ENCODE measurements at regions of chr1 and their contacts with region 1.

Region 1: DNA sequence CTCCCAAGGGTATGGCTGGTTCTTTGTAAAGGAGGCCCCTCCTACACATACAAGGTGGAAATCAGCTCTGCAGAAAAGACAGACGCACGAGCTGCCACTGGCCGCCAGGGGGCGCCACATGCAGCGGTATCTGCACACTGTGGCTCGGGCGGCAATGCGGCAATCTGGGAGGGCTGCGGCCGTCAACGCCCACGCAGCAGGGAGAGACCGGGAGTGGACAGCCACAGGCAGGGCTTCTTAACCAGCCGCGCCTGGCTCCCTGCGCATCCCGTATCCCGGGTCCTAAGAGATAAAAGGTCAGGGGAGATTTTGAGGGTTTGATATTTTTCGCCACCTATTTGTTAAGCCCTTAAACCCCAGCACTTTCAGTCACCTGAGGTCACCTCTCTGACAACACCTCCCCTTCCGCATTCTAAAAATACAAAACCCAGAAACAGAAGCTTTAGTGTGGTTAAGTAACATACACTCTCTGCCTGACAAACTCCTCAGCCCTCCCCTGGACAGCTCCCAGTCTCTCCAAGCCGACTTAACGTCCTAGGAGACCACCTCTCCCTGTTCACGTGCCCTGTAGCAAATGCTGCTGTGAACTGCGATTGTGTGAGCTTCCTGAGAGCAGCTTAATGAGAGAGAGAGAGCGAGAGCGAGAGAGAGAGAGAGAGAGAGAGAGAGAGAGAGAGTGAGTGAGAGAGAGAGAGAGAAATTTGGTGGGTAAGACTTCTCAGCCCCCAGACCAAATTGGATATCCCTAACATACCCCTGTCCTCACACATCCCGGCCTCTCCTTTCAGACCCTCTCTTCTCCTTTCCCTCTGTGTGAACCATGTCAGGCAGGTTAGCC is 13.5 kb upstream of the KCNA2 start:
- DNase-seq: peak; percentile 89

Region 2: DNA sequence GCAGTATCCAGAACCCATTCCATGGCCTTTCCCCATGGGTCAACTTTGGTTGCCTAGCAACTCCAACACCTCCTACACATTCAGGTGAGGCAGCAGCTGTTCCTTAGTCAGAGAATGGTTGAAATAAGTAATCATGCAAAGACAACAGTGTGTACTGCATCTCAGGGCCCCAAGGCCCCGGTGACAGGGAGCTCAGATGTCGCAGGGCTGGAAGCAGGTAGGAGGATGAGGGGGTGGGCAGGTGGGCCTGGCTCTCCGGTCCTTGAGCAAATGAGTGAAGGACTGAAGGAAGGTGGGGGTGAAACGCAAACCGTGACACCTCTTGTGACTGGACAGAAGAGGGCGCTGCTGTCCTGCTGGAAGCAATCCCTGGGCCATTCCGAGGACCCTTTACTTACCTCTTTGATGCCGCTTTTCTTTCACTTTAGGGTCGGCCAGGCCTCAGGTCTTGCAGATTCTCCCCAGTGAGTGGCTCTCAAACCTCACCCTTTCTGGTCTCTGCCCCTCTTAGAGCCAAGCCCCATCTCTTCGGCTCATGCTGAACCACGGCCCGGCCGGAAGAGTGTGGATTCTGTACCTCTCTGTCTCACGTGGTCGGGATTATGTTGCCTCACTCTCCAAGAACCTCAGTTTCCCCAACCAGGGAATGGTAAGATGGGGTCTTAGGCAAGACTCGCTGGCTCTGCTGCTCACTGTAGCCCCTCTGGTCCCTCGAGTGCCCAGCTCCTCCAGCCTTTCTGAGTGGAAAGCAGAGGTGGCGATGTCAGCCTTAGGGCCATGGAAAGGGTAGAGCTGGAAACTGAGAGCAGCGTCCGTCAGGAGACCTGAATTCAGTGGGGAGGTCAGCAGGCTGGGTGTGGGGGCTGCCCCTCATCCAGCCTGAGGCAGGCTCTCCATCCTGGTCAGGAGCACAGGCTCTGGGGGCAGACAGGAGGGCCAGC is 95.0 kb before region 1 on chr1:
- in situ Hi-C with region 1: loop called (anchors 10 kb)
- DNase-seq: peak; percentile 67

Region 3: DNA sequence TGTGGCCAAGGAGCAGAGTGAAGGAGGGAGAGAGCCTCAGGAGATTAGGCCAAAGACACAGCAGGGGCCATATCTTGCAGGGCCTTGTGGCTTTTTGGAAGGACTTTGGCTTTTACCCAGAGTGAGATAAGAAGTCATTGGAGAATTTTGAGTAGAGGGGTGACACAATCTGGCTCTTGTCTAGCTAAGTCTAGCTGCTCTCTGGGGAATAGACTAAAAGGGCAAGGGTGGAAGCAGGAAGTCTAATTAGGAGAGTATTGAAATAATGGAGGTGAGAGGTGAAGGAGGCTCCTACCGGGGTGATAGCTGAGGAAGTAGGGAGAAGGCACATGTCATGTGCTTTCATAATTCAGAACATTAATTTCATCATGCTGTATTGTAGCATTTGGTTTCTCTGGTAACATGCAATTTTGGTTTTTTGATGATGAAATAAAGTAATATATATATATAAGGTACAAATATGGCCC is 89.4 kb after region 1 on chr1:
- in situ Hi-C with region 1: no loop called
- DNase-seq: no peak

Region 4: DNA sequence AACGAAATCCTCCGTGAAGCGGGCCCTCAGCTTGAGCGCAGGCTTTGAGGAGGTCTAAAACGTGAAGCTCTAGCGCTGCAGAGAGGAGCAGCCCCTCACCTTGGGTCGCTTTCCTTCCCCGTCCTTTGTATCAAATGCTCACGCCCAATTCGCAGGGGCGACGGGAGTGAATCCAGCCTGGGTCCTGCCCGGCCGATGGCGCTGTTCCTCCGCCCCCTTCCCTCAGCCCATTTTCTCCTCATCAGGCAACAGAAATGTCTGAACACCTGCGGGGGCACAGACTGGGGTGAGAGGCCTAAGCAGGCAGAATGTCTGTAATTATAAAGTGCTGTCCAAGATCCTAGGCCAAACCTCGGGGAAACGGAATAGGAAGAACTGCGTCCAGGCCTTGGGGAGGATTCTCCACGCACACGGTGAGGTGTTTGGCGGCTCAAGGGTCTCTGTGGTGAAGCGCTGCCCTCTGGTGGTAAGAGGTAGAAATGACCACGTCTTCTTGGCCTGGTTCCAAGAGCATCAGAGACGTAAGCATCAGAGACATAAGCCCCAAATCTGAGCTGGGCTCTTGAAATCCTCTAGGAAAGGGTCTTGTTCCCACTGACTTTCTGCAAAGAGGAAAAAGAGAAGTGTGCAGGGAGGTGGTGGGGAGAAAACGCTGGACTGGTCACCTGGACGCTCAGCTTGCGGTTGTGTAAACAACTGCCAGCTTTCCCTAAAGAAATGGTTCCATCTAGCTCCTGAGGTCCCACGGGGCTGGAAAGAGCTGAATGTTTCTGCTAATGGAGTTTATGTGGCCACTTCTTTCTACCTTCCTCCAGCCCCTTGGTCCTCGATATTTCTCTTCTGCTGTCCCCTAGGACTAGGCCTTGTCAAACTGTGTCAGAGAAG is 161.2 kb after region 1 on chr1:
- in situ Hi-C with region 1: loop called (anchors 10 kb)
- DNase-seq: peak; percentile 92

Measured in KBM-7 (cell line).